ENCODE measurements at regions of chr17 and their contacts with region 1.

Region 1: GRCh38 chr17:700504-701094 is 14.0 kb downstream of the VPS53 start:
- DNase-seq: peak; percentile 40
- H3K4me3 ChIP-seq: no peak overlapping the region
- H3K27ac ChIP-seq: no peak overlapping the region
- H3K4me1 ChIP-seq: peaks cover 13% of the 10 kb centered on the region
- H3K27me3 ChIP-seq: no peaks in the 10 kb centered on the region
- CTCF ChIP-seq: peak; percentile 19 to 23
- POLR2A ChIP-seq: no peak

Region 2: DNA sequence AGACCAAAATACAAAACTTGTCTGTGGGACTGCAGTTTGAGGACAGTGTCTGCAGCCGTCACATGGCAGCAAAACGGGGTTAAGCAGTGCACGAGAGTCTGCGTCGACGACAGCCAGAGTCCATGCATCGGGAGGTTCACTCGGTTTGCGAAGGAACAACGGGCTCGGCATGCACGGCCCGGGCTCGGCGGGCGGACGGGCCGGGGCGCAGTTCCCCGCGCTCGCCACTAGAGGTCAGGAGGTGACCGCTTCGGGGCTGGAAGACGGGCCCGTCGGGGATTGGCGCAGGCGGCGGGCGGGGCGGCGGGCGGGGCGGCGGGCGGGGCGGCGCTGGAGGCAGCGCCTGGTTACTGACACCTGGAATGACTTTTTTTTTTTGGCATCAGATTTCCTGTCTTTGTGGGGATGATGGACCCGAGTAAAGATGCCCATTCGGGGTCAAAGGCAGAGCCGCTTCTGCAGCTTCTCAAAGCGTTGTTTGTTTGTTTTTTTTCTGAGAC is 556.8 kb before region 1 on chr17:
- CTCF ChIA-PET with region 1: interaction called, 18 read pairs
- POLR2A ChIA-PET with region 1: no interaction called
- dilution Hi-C with region 1: no loop called
- intact Hi-C with region 1: loop called (anchors 5 kb)
- DNase-seq: peak; percentile 73
- H3K4me3 ChIP-seq: no peak overlapping the region
- H3K27ac ChIP-seq: no peak overlapping the region
- H3K4me1 ChIP-seq: no peaks in the 10 kb centered on the region
- H3K27me3 ChIP-seq: no peaks in the 10 kb centered on the region
- CTCF ChIP-seq: peak; percentile 73 to 87
- POLR2A ChIP-seq: no peak

Region 3: GRCh38 chr17:385926-386876 is 314.4 kb before region 1 on chr17:
- CTCF ChIA-PET with region 1: interaction called, 39 read pairs
- POLR2A ChIA-PET with region 1: no interaction called
- dilution Hi-C with region 1: no loop called
- intact Hi-C with region 1: no loop called
- DNase-seq: peak; percentile 34
- H3K4me3 ChIP-seq: peak overlapping the region in 1 of 3 experiments; percentile 31
- H3K27ac ChIP-seq: no peak overlapping the region
- H3K4me1 ChIP-seq: peaks cover 5% of the 10 kb centered on the region
- H3K27me3 ChIP-seq: no peaks in the 10 kb centered on the region
- CTCF ChIP-seq: peak; percentile 30 to 58
- POLR2A ChIP-seq: no peak

Region 4: GRCh38 chr17:416293-417206 is 284.0 kb before region 1 on chr17:
- CTCF ChIA-PET with region 1: interaction called, 762 read pairs
- POLR2A ChIA-PET with region 1: interaction called, 8 read pairs
- dilution Hi-C with region 1: no loop called
- intact Hi-C with region 1: loop called (anchors 1 kb)
- DNase-seq: no peak
- H3K4me3 ChIP-seq: no peak overlapping the region
- H3K27ac ChIP-seq: no peak overlapping the region
- H3K4me1 ChIP-seq: no peaks in the 10 kb centered on the region
- H3K27me3 ChIP-seq: no peaks in the 10 kb centered on the region
- CTCF ChIP-seq: no peak
- POLR2A ChIP-seq: no peak

Region 5: DNA sequence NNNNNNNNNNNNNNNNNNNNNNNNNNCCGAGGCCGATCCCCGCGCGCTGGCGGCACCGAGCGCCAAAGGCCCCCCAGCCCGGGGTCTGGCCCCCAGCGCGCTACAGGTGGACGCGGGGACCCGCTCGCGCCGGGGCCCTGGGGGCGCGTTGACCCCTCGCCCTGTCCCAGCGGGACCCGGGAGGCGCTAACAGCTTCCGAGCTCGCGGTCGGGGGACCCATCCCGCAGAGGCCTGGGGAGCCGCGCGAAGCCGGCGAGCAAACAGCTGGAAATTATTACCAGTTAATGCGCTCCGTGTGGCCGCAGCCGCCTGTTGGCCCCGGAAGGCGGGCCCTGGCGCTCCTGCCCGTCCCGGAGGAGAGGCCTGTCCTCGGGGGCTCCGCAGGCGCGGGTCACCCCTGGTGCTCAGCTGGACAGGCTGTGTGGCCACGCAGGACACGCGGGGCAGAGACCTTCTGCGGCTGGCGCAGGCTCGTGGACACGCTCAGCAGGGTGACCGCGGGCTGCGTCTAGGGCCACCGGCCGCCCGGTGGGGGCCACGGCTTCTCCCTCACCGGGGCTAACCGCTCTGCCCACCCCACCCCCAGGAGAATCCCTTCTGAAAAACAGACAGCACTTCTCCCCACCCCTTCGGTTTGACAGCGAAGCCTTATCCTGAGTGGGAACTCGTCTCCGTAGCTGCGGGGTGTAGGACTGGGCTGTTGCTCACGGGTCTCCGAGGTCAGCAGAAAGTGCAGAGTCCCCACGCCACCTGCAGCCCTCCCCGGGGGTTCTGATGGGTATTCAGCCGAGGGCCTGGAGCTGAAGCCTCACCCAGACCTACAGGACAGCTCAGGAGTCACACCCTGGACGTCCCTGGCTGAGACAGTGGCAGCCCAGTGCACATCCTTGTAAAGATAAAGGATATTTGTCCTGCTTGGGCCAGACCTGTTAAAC is 209.2 kb before region 1 on chr17:
- CTCF ChIA-PET with region 1: interaction called, 18 read pairs
- POLR2A ChIA-PET with region 1: interaction called, 3 read pairs
- dilution Hi-C with region 1: no loop called
- intact Hi-C with region 1: no loop called
- DNase-seq: peak; percentile 42
- H3K4me3 ChIP-seq: peak overlapping the region; percentile 37 to 40 (median 39)
- H3K27ac ChIP-seq: no peak overlapping the region
- H3K4me1 ChIP-seq: peaks cover 5% of the 10 kb centered on the region
- H3K27me3 ChIP-seq: no peaks in the 10 kb centered on the region
- CTCF ChIP-seq: peak in 1 of 2 donors; percentile 3
- POLR2A ChIP-seq: no peak

Region 6: GRCh38 chr17:588519-588918 is 112.1 kb before region 1 on chr17:
- CTCF ChIA-PET with region 1: no interaction called
- POLR2A ChIA-PET with region 1: no interaction called
- dilution Hi-C with region 1: no loop called
- intact Hi-C with region 1: no loop called
- DNase-seq: no peak
- H3K4me3 ChIP-seq: no peak overlapping the region
- H3K27ac ChIP-seq: no peak overlapping the region
- H3K4me1 ChIP-seq: no peaks in the 10 kb centered on the region
- H3K27me3 ChIP-seq: no peaks in the 10 kb centered on the region
- CTCF ChIP-seq: no peak
- POLR2A ChIP-seq: no peak

Region 7: GRCh38 chr17:633641-634101 is 66.9 kb before region 1 on chr17:
- CTCF ChIA-PET with region 1: interaction called, 12 read pairs
- POLR2A ChIA-PET with region 1: no interaction called
- dilution Hi-C with region 1: no loop called
- intact Hi-C with region 1: no loop called
- DNase-seq: peak; percentile 78
- H3K4me3 ChIP-seq: no peak overlapping the region
- H3K27ac ChIP-seq: peak overlapping the region; percentile 71
- H3K4me1 ChIP-seq: peaks cover 11% of the 10 kb centered on the region
- H3K27me3 ChIP-seq: no peaks in the 10 kb centered on the region
- CTCF ChIP-seq: peak in 1 of 2 donors; percentile 16
- POLR2A ChIP-seq: no peak

Region 8: DNA sequence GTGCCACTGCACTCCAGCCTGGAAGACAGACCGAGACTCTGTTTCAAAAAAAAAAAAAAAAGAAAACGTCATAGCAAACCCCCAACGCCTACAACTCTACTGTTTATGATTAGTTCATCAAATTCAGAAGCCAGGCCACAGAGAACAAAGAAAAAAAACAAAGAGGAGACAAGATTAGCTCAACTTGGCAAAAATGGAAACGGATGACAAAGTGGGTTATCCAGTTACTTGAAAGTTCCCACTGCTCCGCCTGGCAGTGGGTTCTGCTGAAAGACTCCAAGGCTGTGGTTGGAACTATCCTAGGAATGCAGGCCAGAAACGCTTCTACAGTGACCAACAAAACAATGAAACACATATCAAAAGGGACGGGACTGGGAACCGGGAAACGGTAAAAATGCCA is 134.7 kb after region 1 on chr17:
- CTCF ChIA-PET with region 1: no interaction called
- POLR2A ChIA-PET with region 1: no interaction called
- dilution Hi-C with region 1: no loop called
- intact Hi-C with region 1: no loop called
- DNase-seq: peak; percentile 37
- H3K4me3 ChIP-seq: no peak overlapping the region
- H3K27ac ChIP-seq: no peak overlapping the region
- H3K4me1 ChIP-seq: no peaks in the 10 kb centered on the region
- H3K27me3 ChIP-seq: no peaks in the 10 kb centered on the region
- CTCF ChIP-seq: no peak
- POLR2A ChIP-seq: no peak

Measured in endothelial cell of umbilical vein (primary cell).